ENCODE measurements at regions of chr12 and their contacts with region 1.

Region 1: GRCh38 chr12:64403707-64404469 is at the start of gene XPOT:
- DNase-seq: peak; percentile 82 to 99 (median 91)
- ATAC-seq: peak; percentile 94
- H3K4me3 ChIP-seq: peak within 1 kb of the TSS; percentile 96
- H3K4me3 Mint-ChIP-seq: peak within 1 kb of the TSS; percentile 98
- H3K27ac ChIP-seq: peak within 1 kb of the TSS; percentile 78 to 83
- H3K27ac Mint-ChIP-seq: peak within 1 kb of the TSS; percentile 94
- H3K4me1 ChIP-seq: peaks cover 31% of the 10 kb centered on the region
- H3K4me1 Mint-ChIP-seq: peaks cover 36% of the 10 kb centered on the region
- H3K27me3 ChIP-seq: no peaks in the 10 kb centered on the region
- H3K27me3 Mint-ChIP-seq: no peaks in the 10 kb centered on the region
- CTCF ChIP-seq: no peak
- total RNA-seq, gene XPOT: 39.6 to 40.0 TPM

Region 2: DNA sequence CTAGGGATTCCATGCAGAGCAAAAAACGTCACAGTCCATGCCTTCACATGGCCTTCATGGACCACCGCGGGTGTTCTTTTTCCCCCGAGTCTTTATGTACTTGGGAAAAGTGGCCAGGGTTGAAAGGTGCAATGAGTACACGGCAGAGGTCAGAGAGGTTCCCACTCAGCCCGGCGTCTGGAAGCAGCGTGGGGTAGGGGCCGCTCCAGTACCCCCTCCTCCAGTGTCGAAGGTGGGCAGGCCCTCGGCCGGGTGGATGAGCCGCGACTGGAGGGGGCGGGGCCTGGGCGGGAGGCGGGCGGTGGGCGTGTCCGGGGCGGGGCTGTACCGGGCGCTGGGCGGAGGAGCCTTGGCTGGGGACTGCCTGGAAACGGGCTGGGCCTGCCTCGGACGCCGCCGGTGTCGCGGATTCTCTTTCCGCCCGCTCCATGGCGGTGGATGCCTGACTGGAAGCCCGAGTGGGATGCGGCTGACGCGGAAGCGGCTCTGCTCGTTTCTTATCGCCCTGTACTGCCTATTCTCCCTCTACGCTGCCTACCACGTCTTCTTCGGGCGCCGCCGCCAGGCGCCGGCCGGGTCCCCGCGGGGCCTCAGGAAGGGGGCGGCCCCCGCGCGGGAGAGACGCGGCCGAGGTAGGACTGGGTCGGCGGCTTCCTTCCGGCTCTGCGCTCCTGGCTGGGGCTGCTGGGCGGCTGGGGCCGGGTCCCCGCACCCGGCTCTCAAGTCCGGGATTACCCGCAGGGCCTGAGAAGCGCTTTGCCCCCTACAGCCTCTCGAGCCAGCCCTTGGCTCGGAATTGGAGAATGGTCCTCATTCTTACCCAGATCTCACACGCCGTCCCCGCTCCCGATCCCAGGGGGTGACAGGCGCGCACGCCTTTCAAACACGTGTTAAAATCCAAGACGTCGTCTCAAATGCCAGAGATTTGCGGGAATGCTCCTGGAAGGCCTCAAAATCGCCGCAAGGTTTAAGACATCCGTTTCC is 624.1 kb before region 1 on chr12 and contains the start of gene RXYLT1:
- CTCF ChIA-PET with region 1: no interaction called
- POLR2A ChIA-PET with region 1: interaction called, 3 read pairs
- intact Hi-C with region 1: loop called in 1 of 2 experiments (anchors 2 kb)
- DNase-seq: peak; percentile 70 to 90 (median 80)
- ATAC-seq: peak; percentile 90
- H3K4me3 ChIP-seq: peak within 1 kb of the TSS; percentile 83
- H3K4me3 Mint-ChIP-seq: peak within 1 kb of the TSS; percentile 97
- H3K27ac ChIP-seq: peak within 1 kb of the TSS; percentile 83 to 84
- H3K27ac Mint-ChIP-seq: peak within 1 kb of the TSS; percentile 86
- H3K4me1 ChIP-seq: peaks cover 11% of the 10 kb centered on the region
- H3K4me1 Mint-ChIP-seq: peaks cover 46% of the 10 kb centered on the region
- H3K27me3 ChIP-seq: no peaks in the 10 kb centered on the region
- H3K27me3 Mint-ChIP-seq: no peaks in the 10 kb centered on the region
- CTCF ChIP-seq: no peak
- total RNA-seq, gene RXYLT1: 6.2 to 6.3 TPM

Region 3: GRCh38 chr12:64222009-64222765 is 181.7 kb before region 1 on chr12 and contains the start of gene KICS2:
- CTCF ChIA-PET with region 1: no interaction called
- POLR2A ChIA-PET with region 1: interaction called, 15 read pairs
- intact Hi-C with region 1: loop called (anchors 2 to 5 kb)
- DNase-seq: peak; percentile 79 to 97 (median 88)
- ATAC-seq: peak; percentile 85
- H3K4me3 ChIP-seq: peak within 1 kb of the TSS; percentile 78
- H3K4me3 Mint-ChIP-seq: peak within 1 kb of the TSS; percentile 97
- H3K27ac ChIP-seq: peak within 1 kb of the TSS; percentile 84 to 98
- H3K27ac Mint-ChIP-seq: peak within 1 kb of the TSS; percentile 95
- H3K4me1 ChIP-seq: peaks cover 13% of the 10 kb centered on the region
- H3K4me1 Mint-ChIP-seq: peaks cover 41% of the 10 kb centered on the region
- H3K27me3 ChIP-seq: no peaks in the 10 kb centered on the region
- H3K27me3 Mint-ChIP-seq: peaks cover 12% of the 10 kb centered on the region
- CTCF ChIP-seq: no peak
- total RNA-seq, gene KICS2: 13.6 to 14.0 TPM

Region 4: DNA sequence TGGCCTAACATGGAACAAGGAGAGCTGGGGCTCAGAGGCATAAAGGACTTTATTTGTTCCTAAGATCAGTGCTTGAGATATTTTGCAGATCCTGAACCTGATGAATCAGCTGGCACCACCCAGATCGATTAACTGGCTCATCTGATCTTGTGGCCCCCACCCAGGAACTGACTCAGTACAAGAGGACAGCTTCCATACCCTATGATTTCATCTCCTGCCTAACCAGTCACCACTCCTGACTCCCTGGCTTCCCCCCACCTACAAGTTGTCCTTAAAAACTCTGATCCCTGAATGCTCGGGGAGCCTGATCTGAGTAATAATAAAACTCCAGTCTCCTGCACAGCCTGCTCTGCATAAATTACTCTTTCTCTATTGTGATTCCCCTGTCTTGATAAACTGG is 18.4 kb before region 1 on chr12:
- CTCF ChIA-PET with region 1: no interaction called
- POLR2A ChIA-PET with region 1: interaction called, 17 read pairs
- intact Hi-C with region 1: no loop called
- DNase-seq: peak in 3 of 14 experiments; percentile 9 to 41 (median 12)
- ATAC-seq: peak; percentile 31
- H3K4me3 ChIP-seq: no peak overlapping the region
- H3K4me3 Mint-ChIP-seq: peak overlapping the region; percentile 59
- H3K27ac ChIP-seq: peak overlapping the region; percentile 50 to 56
- H3K27ac Mint-ChIP-seq: peak overlapping the region; percentile 77
- H3K4me1 ChIP-seq: peaks cover 30% of the 10 kb centered on the region
- H3K4me1 Mint-ChIP-seq: peaks cover 31% of the 10 kb centered on the region
- H3K27me3 ChIP-seq: no peaks in the 10 kb centered on the region
- H3K27me3 Mint-ChIP-seq: no peaks in the 10 kb centered on the region
- CTCF ChIP-seq: no peak

Region 5: GRCh38 chr12:64451687-64452558 is 48.0 kb after region 1 on chr12 and contains the start of gene TBK1:
- CTCF ChIA-PET with region 1: no interaction called
- POLR2A ChIA-PET with region 1: no interaction called
- intact Hi-C with region 1: loop called (anchors 5 kb)
- DNase-seq: peak in 13 of 14 experiments; percentile 20 to 80 (median 45)
- ATAC-seq: peak; percentile 64
- H3K4me3 ChIP-seq: peak within 1 kb of the TSS; percentile 99
- H3K4me3 Mint-ChIP-seq: peak within 1 kb of the TSS; percentile 94
- H3K27ac ChIP-seq: peak within 1 kb of the TSS; percentile 79 to 86
- H3K27ac Mint-ChIP-seq: peak within 1 kb of the TSS; percentile 92
- H3K4me1 ChIP-seq: peaks cover 28% of the 10 kb centered on the region
- H3K4me1 Mint-ChIP-seq: peaks cover 49% of the 10 kb centered on the region
- H3K27me3 ChIP-seq: no peaks in the 10 kb centered on the region
- H3K27me3 Mint-ChIP-seq: no peaks in the 10 kb centered on the region
- CTCF ChIP-seq: no peak
- total RNA-seq, gene TBK1: 5.6 to 7.2 TPM

Region 6: DNA sequence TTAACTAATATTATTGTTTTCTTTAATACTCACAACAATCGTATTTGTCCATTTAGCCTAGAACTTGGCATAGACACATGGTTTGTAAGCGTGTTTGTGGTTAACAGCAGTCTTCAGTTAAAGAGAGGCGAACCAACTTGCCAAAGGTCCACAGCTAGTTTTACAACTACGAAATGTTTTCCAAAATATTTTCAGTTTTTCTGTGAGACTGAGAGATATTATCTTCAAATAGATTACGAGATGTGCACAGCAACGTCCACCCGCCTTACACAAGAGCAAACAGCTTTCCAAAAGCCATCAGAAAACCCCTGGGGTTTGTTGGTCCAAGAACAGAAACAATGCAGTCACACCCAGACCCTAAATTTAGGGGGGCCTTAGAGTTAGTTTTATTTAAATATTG is 147.8 kb after region 1 on chr12:
- CTCF ChIA-PET with region 1: no interaction called
- POLR2A ChIA-PET with region 1: no interaction called
- intact Hi-C with region 1: no loop called
- DNase-seq: no peak
- ATAC-seq: no peak
- H3K4me3 ChIP-seq: no peak overlapping the region
- H3K4me3 Mint-ChIP-seq: no peak overlapping the region
- H3K27ac ChIP-seq: no peak overlapping the region
- H3K27ac Mint-ChIP-seq: no peak overlapping the region
- H3K4me1 ChIP-seq: no peaks in the 10 kb centered on the region
- H3K4me1 Mint-ChIP-seq: peaks cover 13% of the 10 kb centered on the region
- H3K27me3 ChIP-seq: no peaks in the 10 kb centered on the region
- H3K27me3 Mint-ChIP-seq: no peaks in the 10 kb centered on the region
- CTCF ChIP-seq: no peak

Region 7: GRCh38 chr12:64759035-64759901 is 355.4 kb after region 1 on chr12 and contains the start of gene GNS:
- CTCF ChIA-PET with region 1: no interaction called
- POLR2A ChIA-PET with region 1: interaction called, 4 read pairs
- intact Hi-C with region 1: loop called in 1 of 2 experiments (anchors 2 kb)
- DNase-seq: peak; percentile 81 to 95 (median 90)
- ATAC-seq: peak; percentile 87
- H3K4me3 ChIP-seq: peak within 1 kb of the TSS; percentile 62
- H3K4me3 Mint-ChIP-seq: peak within 1 kb of the TSS; percentile 99
- H3K27ac ChIP-seq: peak within 1 kb of the TSS; percentile 52 to 54
- H3K27ac Mint-ChIP-seq: peak within 1 kb of the TSS; percentile 85
- H3K4me1 ChIP-seq: peaks cover 23% of the 10 kb centered on the region
- H3K4me1 Mint-ChIP-seq: peaks cover 54% of the 10 kb centered on the region
- H3K27me3 ChIP-seq: no peaks in the 10 kb centered on the region
- H3K27me3 Mint-ChIP-seq: no peaks in the 10 kb centered on the region
- CTCF ChIP-seq: no peak
- total RNA-seq, gene GNS: 8.7 to 10.0 TPM

Region 8: GRCh38 chr12:66130277-66131066 is 1726.6 kb after region 1 on chr12 and contains the start of gene LLPH:
- CTCF ChIA-PET with region 1: no interaction called
- POLR2A ChIA-PET with region 1: no interaction called
- intact Hi-C with region 1: loop called in 1 of 2 experiments (anchors 10 kb)
- DNase-seq: peak; percentile 78 to 94 (median 84)
- ATAC-seq: peak; percentile 90
- H3K4me3 ChIP-seq: peak within 1 kb of the TSS; percentile 96
- H3K4me3 Mint-ChIP-seq: peak within 1 kb of the TSS; percentile 95
- H3K27ac ChIP-seq: peak within 1 kb of the TSS; percentile 77 to 89
- H3K27ac Mint-ChIP-seq: peak within 1 kb of the TSS; percentile 96
- H3K4me1 ChIP-seq: peaks cover 13% of the 10 kb centered on the region
- H3K4me1 Mint-ChIP-seq: peaks cover 71% of the 10 kb centered on the region
- H3K27me3 ChIP-seq: no peaks in the 10 kb centered on the region
- H3K27me3 Mint-ChIP-seq: no peaks in the 10 kb centered on the region
- CTCF ChIP-seq: no peak
- total RNA-seq, gene LLPH: 27.3 to 31.0 TPM